Activated CD4-positive, alpha-beta memory T cell treated with anti-CD3 and anti-CD28 coated beads, Interleukin-2, amount 10 ng/mL, durations not matched to agents 7 days and 5 days (primary cell): ENCODE measurements at regions of chr3 and their contacts with region 1.

Region 1: DNA sequence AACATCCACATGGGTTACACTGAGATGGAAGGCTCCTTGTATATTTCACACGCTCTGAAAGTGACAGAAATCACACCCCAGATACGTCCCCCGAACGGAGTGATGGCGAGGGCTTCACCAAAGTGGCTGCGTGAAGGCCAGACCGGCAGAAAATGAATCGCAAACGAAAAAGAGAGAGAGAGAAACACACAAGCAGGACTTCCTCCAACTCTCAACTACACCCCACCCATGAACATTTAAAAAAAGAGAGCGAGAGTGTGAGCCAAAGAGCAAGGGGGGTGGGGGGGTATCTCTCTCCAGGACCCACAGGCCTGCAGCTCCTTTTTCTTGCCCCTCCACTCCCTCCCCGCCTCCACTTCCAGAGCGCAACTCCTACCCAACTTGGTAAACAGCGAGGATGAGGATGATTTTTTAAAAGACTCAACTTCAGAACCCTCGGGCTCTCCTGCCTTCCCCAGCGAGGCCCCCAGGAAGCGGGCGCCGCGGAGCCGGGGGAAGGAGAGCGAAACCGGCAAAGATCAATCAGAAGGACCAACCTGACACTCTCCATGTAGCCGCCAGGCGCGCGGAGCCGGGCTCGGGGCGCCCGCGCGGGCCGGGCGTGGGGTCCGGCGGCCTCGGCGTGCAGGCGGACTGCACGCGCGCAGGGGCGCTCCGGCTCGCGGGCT is 519.1 kb downstream of the FOXP1 start:
- DNase-seq: peak; percentile 73
- H3K4me3 Mint-ChIP-seq: no peak overlapping the region
- H3K27ac Mint-ChIP-seq: no peak overlapping the region
- H3K4me1 Mint-ChIP-seq: peaks cover 60% of the 10 kb centered on the region
- H3K27me3 Mint-ChIP-seq: no peaks in the 10 kb centered on the region

Region 2: GRCh38 chr3:71010726-71011455 is 53.5 kb before region 1 on chr3:
- CTCF ChIA-PET with region 1: interaction called, 6 read pairs
- POLR2A ChIA-PET with region 1: interaction called, 78 read pairs
- DNase-seq: peak; percentile 57
- H3K4me3 Mint-ChIP-seq: peak overlapping the region; percentile 57
- H3K27ac Mint-ChIP-seq: peak overlapping the region; percentile 86
- H3K4me1 Mint-ChIP-seq: peaks cover 61% of the 10 kb centered on the region
- H3K27me3 Mint-ChIP-seq: no peaks in the 10 kb centered on the region

Region 3: DNA sequence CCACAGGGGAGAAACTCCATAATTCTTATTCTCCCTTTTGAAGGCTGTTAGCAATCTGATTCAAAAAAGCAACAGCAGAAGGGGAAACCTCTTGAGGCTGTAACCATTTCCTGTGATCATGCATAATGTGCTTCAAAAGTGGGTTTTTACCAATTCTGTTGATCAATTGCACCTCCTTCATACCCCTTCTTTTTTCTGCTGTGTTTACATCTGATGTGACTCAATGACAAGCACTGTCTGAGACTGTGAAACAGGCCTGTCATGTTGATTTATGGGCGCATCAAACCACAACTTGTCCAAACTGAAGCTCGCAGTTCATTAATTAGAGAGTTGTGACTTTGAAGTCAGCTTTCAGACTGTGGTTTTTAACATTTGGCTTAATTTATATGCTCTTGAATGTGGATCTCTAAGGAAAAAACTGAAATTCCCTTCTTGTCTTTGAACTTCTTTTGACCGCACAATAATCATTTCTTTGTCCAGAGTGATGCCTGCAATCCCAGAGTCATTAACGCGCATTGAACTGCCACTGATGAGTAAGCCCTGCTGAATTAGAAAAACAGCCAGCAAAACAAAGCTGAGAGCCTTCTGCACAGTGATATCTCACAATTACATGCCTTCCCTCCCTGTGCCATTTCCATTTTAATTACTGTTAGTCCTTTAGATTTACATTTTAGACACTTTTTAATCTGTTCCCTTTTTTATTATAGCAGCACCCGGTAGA is 13.7 kb before region 1 on chr3:
- CTCF ChIA-PET with region 1: interaction called, 5 read pairs
- POLR2A ChIA-PET with region 1: interaction called, 47 read pairs
- DNase-seq: peak; percentile 42
- H3K4me3 Mint-ChIP-seq: no peak overlapping the region
- H3K27ac Mint-ChIP-seq: peak overlapping the region; percentile 76
- H3K4me1 Mint-ChIP-seq: peaks cover 92% of the 10 kb centered on the region
- H3K27me3 Mint-ChIP-seq: no peaks in the 10 kb centered on the region

Region 4: GRCh38 chr3:71087143-71088018 is 23.0 kb after region 1 on chr3:
- CTCF ChIA-PET with region 1: interaction called, 6 read pairs
- POLR2A ChIA-PET with region 1: interaction called, 58 read pairs
- DNase-seq: peak; percentile 62
- H3K4me3 Mint-ChIP-seq: peak overlapping the region; percentile 23
- H3K27ac Mint-ChIP-seq: peak overlapping the region; percentile 83
- H3K4me1 Mint-ChIP-seq: peaks cover 66% of the 10 kb centered on the region
- H3K27me3 Mint-ChIP-seq: peaks cover 2% of the 10 kb centered on the region

Region 5: DNA sequence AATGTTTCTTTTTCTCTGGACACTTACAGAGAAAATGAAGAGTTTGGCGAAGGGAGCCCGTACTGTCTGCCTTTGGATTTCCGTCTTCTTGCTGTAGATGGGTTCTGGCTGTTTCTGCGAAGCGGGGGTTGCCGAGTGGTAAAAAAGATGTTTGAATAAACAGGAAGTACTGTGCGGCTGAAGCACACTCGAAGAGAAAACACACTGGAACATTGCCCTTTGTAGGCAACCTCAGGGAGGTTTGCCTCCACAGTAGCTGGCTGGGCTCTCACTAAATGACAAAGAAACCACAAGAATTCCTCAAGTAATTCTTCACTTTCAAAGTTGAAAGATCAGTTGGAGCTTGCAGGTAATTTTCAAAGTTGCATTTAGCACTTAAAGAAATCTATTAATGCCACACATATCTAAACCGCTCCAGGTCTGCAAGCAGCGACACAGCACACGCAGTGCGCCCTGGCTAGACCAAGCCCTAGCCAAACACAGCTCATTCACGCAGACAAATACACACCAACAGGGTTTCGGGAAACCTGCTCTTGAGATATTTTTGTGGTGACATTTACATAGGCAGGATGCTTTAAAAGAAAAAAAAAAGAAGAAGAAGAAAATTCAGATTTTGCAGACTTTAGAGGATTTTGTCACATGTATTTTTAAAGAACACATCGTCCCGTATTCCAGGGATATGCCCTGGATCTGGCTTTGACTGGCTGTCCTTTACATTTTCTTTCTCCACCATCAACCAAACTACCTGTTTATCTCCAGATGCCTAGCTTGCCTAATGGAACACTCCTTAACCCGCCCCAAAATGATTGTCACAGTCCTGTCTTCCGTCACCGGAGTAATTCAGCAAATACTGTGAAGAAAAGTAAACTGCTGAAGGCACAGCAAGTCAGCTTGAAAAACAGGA is 66.3 kb after region 1 on chr3:
- CTCF ChIA-PET with region 1: no interaction called
- POLR2A ChIA-PET with region 1: interaction called, 76 read pairs
- DNase-seq: peak; percentile 81
- H3K4me3 Mint-ChIP-seq: peak overlapping the region; percentile 89
- H3K27ac Mint-ChIP-seq: peak overlapping the region; percentile 93
- H3K4me1 Mint-ChIP-seq: peaks cover 53% of the 10 kb centered on the region
- H3K27me3 Mint-ChIP-seq: no peaks in the 10 kb centered on the region

Region 6: DNA sequence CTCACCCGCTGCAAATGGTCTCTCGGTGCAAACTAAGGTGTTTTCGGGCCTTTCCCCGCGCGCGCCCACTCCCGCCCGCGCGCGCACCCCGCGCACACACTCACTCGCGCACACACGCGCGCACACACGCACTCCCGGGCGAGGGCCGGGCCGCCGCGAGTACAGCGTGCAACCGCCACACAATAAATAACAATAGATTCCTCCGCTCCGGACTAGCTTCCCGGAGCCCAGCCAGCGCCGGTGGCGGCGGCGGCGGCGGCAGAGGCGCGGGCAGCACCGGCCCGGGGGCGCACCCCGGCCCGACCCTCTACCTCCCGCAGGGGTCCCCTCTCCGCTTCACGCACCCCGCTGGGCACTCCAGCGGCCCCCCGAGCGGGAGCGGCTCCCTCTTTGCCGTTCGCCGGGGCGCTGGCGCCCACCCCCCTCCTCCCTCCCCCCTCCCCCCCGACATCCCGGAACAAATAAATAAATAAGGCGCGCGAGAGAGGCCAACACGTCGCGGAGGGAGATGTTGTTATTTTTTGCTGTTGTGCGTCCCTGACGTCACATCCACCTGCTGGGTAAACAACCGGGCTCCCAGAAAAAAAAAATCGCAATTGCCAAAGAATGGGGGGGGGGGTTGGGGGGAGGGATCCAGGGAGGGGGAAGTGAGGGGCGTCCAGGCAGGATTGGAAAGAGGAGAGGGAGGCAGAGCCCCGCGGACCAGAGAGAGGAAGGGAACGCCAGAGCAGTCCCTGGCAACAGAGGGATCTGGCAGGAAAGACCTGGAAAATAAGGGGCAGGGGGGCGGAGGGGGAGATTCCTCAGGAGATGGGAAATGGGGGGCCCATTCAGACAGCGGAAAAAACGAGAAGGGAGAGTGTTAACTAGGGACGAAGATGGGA is 519.4 kb after region 1 on chr3 and contains the start of gene FOXP1:
- CTCF ChIA-PET with region 1: interaction called, 3 read pairs
- POLR2A ChIA-PET with region 1: interaction called, 41 read pairs
- DNase-seq: peak; percentile 66
- H3K4me3 Mint-ChIP-seq: peak within 1 kb of the TSS; percentile 82
- H3K27ac Mint-ChIP-seq: peak within 1 kb of the TSS; percentile 74
- H3K4me1 Mint-ChIP-seq: peaks cover 39% of the 10 kb centered on the region
- H3K27me3 Mint-ChIP-seq: peaks cover 15% of the 10 kb centered on the region
- total RNA-seq, gene FOXP1: 71.3 to 76.9 TPM